ENCODE measurements at regions of chr19 and their contacts with region 1.

Region 1: GRCh38 chr19:33795370-33796163 is 1.1 kb upstream of the KCTD15 start:
- DNase-seq: peak; percentile 61 to 83
- H3K4me3 ChIP-seq: peak overlapping the region; percentile 83
- H3K27ac ChIP-seq: peak overlapping the region; percentile 95
- H3K4me1 ChIP-seq: 0 out of 2 replicates have a peak, but pooled peaks cover 6% of the 10 kb centered on the region
- H3K27me3 ChIP-seq: peaks cover 17% of the 10 kb centered on the region
- CTCF ChIP-seq: peak; percentile 92

Region 2: DNA sequence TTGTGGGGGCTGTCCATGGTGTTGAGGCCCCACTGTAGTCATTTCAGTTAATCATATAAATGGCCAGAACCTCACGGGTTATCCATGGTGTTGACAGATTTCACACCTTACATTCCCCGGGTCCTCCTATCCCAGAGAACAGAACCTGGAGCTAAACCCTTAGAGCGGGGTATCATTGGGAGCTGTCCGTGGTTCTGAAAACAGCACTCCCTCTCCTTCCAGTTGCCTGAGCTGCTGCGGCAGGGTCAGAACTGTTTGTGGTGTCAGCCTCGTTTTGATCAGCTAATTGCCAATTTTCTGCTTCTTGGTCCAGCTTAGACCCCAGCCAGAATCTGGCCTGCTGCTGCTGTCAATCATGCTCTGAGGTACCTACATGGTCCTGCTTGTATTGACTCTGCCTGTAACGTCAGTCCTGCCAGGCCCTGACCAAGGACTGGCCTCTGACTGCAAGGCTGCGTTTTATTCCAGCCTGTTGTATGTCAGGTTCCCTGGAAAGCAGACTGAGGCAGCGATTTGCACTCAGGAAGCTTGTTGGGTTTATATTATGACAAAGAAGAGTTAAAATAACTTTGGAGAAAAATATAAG is 54.7 kb before region 1 on chr19:
- CTCF ChIA-PET with region 1: no interaction called
- POLR2A ChIA-PET with region 1: no interaction called
- intact Hi-C with region 1: no loop called
- DNase-seq: peak in 1 of 2 experiments; percentile 24
- H3K4me3 ChIP-seq: no peak overlapping the region
- H3K27ac ChIP-seq: no peak overlapping the region
- H3K4me1 ChIP-seq: no peaks in the 10 kb centered on the region
- H3K27me3 ChIP-seq: peaks cover 81% of the 10 kb centered on the region
- CTCF ChIP-seq: no peak

Region 3: DNA sequence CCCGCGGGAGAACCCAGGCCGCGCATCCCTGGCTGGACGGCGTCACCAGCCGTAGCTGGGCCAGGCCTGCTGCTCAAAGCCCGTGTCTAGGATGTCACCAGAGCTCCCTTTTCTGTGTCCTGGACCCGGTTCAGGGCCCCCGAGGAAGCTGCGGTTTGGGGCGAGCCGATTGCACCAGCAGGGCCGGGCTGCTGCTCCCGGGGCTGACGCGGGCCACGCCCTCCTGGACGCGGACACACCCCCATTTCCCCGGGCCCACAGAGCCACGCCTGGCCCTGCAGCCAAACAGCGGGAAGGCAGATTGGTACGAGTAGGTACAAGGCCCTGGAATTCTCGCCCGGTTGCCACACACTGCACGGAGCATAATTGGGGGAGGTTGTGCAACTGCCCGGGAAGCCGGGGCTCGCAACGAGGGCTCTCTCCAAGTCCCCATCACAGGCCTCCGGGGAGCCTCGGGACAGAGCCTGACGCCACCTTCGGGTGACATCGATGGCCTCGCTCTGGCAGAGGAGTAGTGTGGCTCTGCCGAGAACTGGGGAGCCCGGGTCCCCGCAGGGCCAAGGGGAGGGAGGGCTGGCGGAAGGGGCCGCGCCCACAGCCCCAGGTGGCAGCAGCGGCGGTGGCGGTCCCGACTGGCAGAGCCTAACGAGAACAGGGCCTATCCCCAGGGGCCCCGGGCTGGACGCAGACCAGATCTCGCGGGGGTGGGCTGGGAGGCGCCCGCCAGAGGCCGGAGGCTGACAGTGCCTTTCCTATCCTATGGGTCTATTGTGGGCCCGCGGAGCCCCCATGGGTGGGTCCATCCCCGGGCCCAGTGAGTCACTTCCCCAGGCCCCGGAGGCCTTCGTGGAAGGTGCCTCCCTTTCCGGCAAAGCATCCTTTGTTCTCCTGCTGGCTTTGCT is 24.6 kb after region 1 on chr19:
- CTCF ChIA-PET with region 1: interaction called, 3 read pairs
- POLR2A ChIA-PET with region 1: no interaction called
- intact Hi-C with region 1: loop called (anchors 1 kb)
- DNase-seq: peak; percentile 84 to 87
- H3K4me3 ChIP-seq: peak overlapping the region; percentile 64
- H3K27ac ChIP-seq: peak overlapping the region; percentile 94
- H3K4me1 ChIP-seq: peaks cover 41% of the 10 kb centered on the region
- H3K27me3 ChIP-seq: no peaks in the 10 kb centered on the region
- CTCF ChIP-seq: no peak

Region 4: GRCh38 chr19:33998739-33999345 is 203.3 kb after region 1 on chr19:
- CTCF ChIA-PET with region 1: no interaction called
- POLR2A ChIA-PET with region 1: no interaction called
- intact Hi-C with region 1: loop called (anchors 5 kb)
- DNase-seq: no peak
- H3K4me3 ChIP-seq: no peak overlapping the region
- H3K27ac ChIP-seq: no peak overlapping the region
- H3K4me1 ChIP-seq: no peaks in the 10 kb centered on the region
- H3K27me3 ChIP-seq: peaks cover 48% of the 10 kb centered on the region
- CTCF ChIP-seq: peak; percentile 62

Region 5: DNA sequence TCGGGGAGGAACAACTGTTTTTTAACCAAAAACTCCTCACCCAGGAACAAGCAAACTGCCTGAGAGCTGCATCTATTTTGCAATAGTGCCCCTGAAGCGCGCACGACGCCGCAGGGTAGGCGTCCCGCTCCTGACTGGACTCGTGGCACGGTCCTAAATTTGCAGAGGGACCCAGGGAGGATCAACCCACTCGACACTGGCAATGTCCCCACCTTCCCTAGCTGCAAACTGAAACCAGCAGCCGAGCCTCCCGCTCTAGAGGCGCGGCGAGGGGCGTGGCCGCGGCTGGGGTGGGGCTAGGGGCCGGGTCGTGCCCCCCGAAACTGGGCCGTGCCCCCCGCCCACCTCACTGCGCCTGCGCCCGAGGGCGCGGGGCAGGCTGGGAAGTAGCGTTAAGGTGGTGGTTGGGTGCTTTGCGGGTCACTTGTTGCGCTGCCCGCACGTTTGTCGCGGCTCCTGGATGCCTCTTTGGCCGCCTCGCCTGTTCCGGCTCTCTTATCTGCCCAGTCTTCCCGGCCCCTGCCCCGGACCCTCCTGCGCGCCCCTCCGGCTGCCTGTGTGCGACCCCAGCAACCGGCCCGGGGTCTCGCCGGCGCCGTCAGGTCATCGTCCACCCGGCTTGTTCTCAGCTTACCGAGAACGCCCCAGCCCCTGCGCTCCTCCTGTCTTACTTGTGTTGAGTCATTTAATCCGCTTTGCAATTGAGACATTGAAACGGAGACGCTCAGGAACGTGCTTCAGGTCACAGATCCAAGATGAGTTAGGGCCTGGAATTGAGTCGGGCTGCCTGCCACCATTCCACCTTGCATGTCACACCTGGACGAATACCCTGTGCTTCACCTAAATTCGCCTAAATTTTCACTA is 338.9 kb after region 1 on chr19:
- CTCF ChIA-PET with region 1: no interaction called
- POLR2A ChIA-PET with region 1: interaction called, 4 read pairs
- intact Hi-C with region 1: loop called (anchors 5 kb)
- DNase-seq: peak; percentile 52 to 92
- H3K4me3 ChIP-seq: peak overlapping the region; percentile 100
- H3K27ac ChIP-seq: peak overlapping the region; percentile 81
- H3K4me1 ChIP-seq: peaks cover 6% of the 10 kb centered on the region; the same call in 1 of the 2 replicates
- H3K27me3 ChIP-seq: peaks cover 22% of the 10 kb centered on the region; the same call in 1 of the 2 replicates
- CTCF ChIP-seq: no peak